ENCODE measurements at regions of chr1 and their contacts with region 1.

Region 1: DNA sequence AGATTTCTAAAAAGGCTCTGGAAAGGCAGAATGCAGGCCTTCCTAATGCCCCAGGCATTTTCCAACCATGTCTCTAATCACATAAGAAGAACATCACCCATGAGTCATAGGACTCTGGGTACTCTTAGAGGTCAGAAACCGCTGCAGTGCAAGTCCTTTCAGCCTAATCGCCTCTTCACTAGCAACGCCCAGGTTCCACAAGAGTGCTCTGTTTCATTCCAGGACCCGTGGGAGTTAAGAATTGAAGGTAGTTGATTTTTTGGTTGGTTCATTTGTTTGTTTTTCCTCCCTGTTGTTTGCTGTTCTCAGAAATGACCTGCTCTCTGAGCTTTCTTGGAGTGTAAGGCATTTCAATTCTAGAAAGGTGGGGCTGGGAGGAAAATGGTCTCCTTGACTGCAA is 123.2 kb downstream of the NR5A2 start:
- DNase-seq: no peak
- H3K4me3 Mint-ChIP-seq: peak overlapping the region; percentile 20
- H3K27ac Mint-ChIP-seq: peak overlapping the region; percentile 77
- H3K4me1 Mint-ChIP-seq: peaks cover 73% of the 10 kb centered on the region
- H3K27me3 Mint-ChIP-seq: no peaks in the 10 kb centered on the region

Region 2: GRCh38 chr1:198880818-198881597 is 1269.7 kb before region 1 on chr1:
- intact Hi-C with region 1: loop called (anchors 10 kb)
- DNase-seq: no peak
- H3K4me3 Mint-ChIP-seq: no peak overlapping the region
- H3K27ac Mint-ChIP-seq: peak overlapping the region; percentile 71
- H3K4me1 Mint-ChIP-seq: peaks cover 59% of the 10 kb centered on the region
- H3K27me3 Mint-ChIP-seq: no peaks in the 10 kb centered on the region

Region 3: GRCh38 chr1:199173356-199173755 is 977.4 kb before region 1 on chr1:
- intact Hi-C with region 1: loop called (anchors 1 kb)
- DNase-seq: peak; percentile 35
- H3K4me3 Mint-ChIP-seq: peak overlapping the region; percentile 31
- H3K27ac Mint-ChIP-seq: peak overlapping the region; percentile 73
- H3K4me1 Mint-ChIP-seq: peaks cover 60% of the 10 kb centered on the region
- H3K27me3 Mint-ChIP-seq: peaks cover 2% of the 10 kb centered on the region

Region 4: DNA sequence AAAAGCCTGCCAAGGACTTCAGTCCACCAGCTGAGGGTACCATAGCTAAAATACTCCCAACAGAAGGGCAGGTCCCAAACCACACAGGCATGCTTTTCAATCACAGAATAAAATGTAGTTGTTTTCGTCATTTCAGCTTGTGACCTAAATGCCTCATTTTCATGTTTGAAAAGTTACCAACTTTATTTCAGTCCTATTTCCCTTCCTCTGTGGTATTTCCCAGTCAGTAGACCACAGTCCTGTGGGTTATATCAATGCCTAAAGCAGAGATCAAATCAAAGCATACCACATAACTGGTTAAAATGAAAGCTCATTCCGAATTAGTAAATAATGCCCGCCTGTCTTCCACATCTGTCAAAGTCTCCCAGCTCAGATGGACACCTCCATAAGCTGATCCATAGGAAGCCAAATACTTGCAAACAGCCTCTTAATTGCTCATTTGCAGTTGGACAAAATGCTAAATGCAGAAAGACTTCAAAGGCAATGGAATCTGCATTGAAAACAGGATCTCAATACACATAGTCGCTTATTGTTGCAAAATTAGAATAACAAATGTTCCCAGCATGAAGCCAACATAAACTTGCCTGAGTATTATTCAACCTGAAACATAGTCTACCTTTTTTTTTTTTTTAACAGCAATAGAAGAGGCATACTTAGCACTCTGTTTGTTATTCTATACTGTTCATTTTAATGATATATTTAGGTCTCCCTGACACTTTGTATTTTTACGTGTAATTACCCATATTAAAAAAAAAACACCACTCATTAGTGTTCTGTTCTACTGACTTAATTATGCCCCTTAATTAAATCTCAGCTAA is 69.4 kb before region 1 on chr1:
- intact Hi-C with region 1: no loop called
- DNase-seq: no peak
- H3K4me3 Mint-ChIP-seq: no peak overlapping the region
- H3K27ac Mint-ChIP-seq: no peak overlapping the region
- H3K4me1 Mint-ChIP-seq: no peaks in the 10 kb centered on the region
- H3K27me3 Mint-ChIP-seq: peaks cover 48% of the 10 kb centered on the region

Region 5: GRCh38 chr1:200207711-200208126 is 57.0 kb after region 1 on chr1:
- intact Hi-C with region 1: loop called (anchors 5 kb)
- DNase-seq: no peak
- H3K4me3 Mint-ChIP-seq: no peak overlapping the region
- H3K27ac Mint-ChIP-seq: no peak overlapping the region
- H3K4me1 Mint-ChIP-seq: peaks cover 6% of the 10 kb centered on the region
- H3K27me3 Mint-ChIP-seq: peaks cover 12% of the 10 kb centered on the region

Region 6: DNA sequence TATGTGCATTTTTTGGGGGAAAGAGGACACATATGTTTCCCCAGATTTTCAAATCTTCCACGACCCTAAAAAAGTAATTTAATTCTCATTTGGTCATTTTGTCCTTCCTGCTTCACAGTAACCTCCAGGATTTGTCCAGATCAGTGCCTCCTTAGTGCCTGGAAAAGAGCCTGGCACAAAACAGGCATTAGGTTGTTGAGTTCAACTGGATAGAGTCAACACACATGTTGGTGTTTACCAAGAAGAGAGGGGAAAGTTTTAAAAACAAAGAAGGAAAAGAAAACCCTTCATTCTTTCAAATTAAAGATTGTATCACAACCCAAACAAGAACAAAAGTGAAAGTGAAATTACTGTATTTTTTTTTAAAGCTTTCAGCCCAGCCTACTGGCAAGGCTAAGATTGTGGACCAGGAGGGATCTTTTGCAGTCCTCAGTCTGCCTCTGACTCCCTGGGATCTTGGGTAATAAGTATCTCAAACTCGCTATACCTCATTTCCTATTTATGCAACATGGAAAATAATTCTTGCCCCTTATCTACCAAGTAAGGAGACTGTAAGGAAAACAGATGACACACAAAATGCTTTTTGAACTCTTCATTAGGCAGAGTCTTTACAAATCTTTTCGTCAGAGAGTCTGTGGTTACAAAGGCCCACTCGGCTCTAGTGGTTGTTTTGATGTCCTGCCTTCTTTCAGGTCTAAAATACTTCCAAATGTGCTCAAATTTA is 201.3 kb after region 1 on chr1:
- intact Hi-C with region 1: loop called (anchors 1 kb)
- DNase-seq: no peak
- H3K4me3 Mint-ChIP-seq: peak overlapping the region; percentile 68
- H3K27ac Mint-ChIP-seq: peak overlapping the region; percentile 77
- H3K4me1 Mint-ChIP-seq: peaks cover 51% of the 10 kb centered on the region
- H3K27me3 Mint-ChIP-seq: peaks cover 2% of the 10 kb centered on the region

Region 7: DNA sequence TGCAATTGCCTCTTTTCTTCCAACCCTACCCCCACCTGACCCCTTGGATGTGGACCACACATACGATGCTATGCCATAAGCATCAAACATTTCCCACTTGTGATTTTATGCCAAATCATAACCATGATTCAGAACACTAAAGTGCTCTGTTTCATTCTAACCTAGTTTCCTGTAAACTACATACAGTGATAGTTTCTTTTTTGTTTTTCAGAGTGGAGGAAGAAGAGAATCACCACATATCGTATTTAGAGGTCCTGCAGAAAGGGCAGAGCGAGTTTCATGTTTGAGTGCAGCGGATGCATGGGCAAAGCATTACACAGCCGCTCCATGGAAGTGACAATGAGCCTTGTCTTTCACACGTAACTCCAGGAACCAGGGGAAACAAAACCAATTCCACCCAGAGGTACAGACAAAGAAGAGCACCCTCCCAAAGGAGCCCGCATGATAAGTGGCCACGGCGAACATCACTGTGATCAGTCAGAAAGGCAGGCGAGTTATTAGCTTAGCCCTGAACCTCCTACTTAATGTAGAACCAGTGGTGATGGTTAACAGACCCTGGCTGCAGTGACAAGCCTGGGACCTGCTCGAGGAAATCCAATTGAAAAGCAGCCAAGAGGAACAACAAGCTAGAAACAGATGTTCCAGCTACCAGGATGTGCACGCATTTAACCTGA is 323.1 kb after region 1 on chr1:
- intact Hi-C with region 1: loop called (anchors 1 kb)
- DNase-seq: no peak
- H3K4me3 Mint-ChIP-seq: peak overlapping the region; percentile 62
- H3K27ac Mint-ChIP-seq: peak overlapping the region; percentile 85
- H3K4me1 Mint-ChIP-seq: peaks cover 43% of the 10 kb centered on the region
- H3K27me3 Mint-ChIP-seq: peaks cover 2% of the 10 kb centered on the region

Region 8: DNA sequence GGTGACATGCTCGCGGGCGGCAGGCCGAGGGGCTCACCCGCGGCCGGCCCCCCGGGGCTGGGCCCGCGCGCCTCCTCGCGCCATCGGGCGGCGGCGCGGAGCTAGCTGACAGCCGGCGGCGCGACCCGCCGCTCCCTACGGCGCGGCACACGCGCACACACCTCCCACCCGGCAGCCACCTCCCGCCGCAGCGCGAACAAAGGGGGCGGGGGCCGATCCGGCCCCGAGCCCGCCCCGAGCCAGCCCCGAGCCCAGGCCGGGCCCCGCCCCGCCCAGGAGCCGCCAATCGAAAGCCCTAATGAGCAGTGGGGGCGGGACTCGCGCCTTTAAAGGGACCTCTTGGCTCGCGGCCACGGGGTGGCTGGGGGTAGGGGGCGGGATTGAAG is 872.8 kb after region 1 on chr1 and contains the start of gene KIF21B:
- intact Hi-C with region 1: loop called (anchors 5 kb)
- DNase-seq: peak; percentile 92
- H3K4me3 Mint-ChIP-seq: peak within 1 kb of the TSS; percentile 100
- H3K27ac Mint-ChIP-seq: peak within 1 kb of the TSS; percentile 99
- H3K4me1 Mint-ChIP-seq: peaks cover 79% of the 10 kb centered on the region
- H3K27me3 Mint-ChIP-seq: no peaks in the 10 kb centered on the region
- total RNA-seq, gene KIF21B: 50.4 and 52.0 TPM in 2 replicates